SK-N-SH (cell line): ENCODE measurements at regions of chr12 and their contacts with region 1.

Region 1: DNA sequence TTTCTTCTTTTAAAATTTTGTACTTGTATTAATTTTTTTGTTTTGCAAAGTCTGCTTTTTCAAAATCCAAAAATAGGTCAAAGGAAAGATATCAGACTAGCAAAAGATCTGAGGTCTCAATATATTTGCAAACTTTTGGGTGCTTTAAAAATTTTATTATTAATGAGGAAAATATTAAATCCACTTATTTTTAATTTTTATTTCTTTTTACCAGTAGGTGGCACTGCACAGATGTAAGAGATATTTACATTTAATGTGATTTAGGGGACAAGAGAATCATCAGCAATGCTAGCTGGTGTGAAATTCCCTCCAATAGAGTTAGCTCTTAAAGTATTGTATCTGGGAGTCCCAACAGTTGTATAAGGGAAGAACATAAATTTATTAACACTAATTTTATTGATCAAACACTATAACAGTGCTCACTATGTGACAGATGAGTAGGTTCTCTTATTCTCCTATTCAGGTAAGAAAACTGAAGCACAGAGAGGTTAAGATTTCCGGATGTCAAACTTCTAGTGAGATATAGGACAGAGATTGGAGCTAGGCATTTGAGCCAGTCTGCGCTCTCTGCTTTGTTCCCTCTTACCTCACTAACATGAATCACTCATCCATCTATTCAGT is 30.5 kb downstream of the ALX1 start:
- DNase-seq: no peak
- H3K4me3 ChIP-seq: no peak overlapping the region
- H3K27ac ChIP-seq: no peak overlapping the region
- H3K4me1 ChIP-seq: no peaks in the 10 kb centered on the region
- H3K27me3 ChIP-seq: no peaks in the 10 kb centered on the region
- CTCF ChIP-seq: peak; percentile 67
- EP300 ChIP-seq: no peak
- RAD21 ChIP-seq: peak; percentile 23; the same call in 1 of the 2 replicates

Region 2: GRCh38 chr12:85329913-85330312 is 19.3 kb after region 1 on chr12:
- CTCF ChIA-PET with region 1: interaction called, 12 read pairs
- POLR2A ChIA-PET with region 1: no interaction called
- DNase-seq: no peak
- H3K4me3 ChIP-seq: no peak overlapping the region
- H3K27ac ChIP-seq: no peak overlapping the region
- H3K4me1 ChIP-seq: no peaks in the 10 kb centered on the region
- H3K27me3 ChIP-seq: no peaks in the 10 kb centered on the region
- CTCF ChIP-seq: no peak
- EP300 ChIP-seq: no peak
- RAD21 ChIP-seq: no peak